ENCODE measurements at regions of chr2 and their contacts with region 1.

Region 1: DNA sequence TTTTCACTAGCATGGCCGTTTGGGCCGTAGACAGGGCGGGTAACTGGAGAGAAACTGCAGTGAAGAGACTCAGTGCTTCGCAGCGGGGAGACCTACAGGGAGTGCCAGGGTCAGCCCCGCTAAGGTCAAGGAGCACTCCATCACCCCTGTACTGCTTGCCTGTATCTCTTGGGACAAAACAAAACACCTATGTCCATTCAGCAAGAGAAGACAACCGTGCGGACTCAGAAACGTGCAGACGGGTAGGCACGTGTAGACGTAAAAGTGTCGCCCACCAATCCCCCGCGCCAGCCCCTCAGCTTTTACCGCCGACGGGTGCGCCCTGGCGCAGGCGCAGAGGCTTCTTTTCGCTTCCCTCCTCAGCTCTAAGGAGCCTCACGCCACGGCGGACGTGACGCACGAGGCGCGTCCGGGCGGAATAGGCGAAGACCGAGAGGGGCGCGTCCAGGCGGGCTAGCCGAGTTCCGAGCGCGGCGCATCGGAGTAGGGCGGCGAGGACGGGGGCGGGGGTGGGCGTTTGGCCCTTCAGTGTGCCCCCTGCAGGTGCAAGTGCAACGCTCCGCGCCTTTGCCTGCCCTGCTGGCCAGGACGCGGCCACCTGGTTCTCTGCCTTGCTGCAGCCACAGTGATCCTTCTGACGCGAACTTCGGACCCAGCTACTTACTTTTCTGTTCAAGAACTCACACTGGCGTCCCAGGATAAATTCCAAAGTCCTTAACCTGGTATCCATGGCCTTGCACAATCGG is 3.3 kb upstream of the SOS1 start:
- DNase-seq: peak; percentile 94 to 98 (median 96)
- H3K4me3 ChIP-seq: peak overlapping the region; percentile 88
- H3K4me3 Mint-ChIP-seq: peak overlapping the region; percentile 87 to 95 (median 94)
- H3K27ac ChIP-seq: peak overlapping the region; percentile 91
- H3K27ac Mint-ChIP-seq: peak overlapping the region; percentile 90 to 99 (median 96)
- H3K4me1 ChIP-seq: peaks cover 32% of the 10 kb centered on the region
- H3K4me1 Mint-ChIP-seq: peaks cover 48 to 64% (median 61%) of the 10 kb centered on the region in 3 donors
- H3K27me3 ChIP-seq: no peaks in the 10 kb centered on the region
- H3K27me3 Mint-ChIP-seq: no peaks in the 10 kb centered on the region

Region 2: DNA sequence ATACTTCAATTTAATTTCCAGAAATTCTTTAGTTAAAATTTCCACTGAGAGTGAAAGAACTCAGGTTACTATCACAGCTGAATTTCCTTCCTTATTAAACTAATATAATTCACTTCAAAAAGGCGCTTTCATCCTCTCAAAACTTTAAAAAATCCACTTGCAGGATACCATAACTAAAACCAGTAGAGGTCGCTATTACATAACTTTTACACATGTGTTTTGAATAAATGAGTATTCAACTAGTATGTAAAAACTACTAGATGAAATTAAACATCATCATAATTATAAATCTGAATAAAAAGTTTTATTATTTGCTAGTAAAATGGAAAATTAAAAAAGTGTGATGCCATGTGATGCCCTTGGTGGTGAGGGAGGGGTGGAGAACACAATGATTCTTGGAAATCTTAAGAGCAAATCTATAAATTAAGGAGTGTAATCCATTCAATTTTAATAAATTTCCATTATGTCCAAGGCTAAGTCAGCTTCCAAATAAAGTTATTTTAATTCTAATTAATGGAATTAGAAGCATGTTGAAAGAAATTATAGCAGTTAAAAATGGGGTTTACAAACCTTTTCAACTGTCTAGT is 64.7 kb before region 1 on chr2:
- CTCF ChIA-PET with region 1: interaction called, 19 read pairs
- POLR2A ChIA-PET with region 1: interaction called, 4 read pairs
- DNase-seq: peak in 2 of 5 donors; percentile 48 to 59
- H3K4me3 ChIP-seq: no peak overlapping the region
- H3K4me3 Mint-ChIP-seq: no peak overlapping the region
- H3K27ac ChIP-seq: no peak overlapping the region
- H3K27ac Mint-ChIP-seq: peak overlapping the region in 3 of 8 donors; percentile 5 to 23 (median 6)
- H3K4me1 ChIP-seq: no peaks in the 10 kb centered on the region
- H3K4me1 Mint-ChIP-seq: peaks cover 0 to 32% (median 14%) of the 10 kb centered on the region in 3 donors
- H3K27me3 ChIP-seq: no peaks in the 10 kb centered on the region
- H3K27me3 Mint-ChIP-seq: no peaks in the 10 kb centered on the region

Region 3: DNA sequence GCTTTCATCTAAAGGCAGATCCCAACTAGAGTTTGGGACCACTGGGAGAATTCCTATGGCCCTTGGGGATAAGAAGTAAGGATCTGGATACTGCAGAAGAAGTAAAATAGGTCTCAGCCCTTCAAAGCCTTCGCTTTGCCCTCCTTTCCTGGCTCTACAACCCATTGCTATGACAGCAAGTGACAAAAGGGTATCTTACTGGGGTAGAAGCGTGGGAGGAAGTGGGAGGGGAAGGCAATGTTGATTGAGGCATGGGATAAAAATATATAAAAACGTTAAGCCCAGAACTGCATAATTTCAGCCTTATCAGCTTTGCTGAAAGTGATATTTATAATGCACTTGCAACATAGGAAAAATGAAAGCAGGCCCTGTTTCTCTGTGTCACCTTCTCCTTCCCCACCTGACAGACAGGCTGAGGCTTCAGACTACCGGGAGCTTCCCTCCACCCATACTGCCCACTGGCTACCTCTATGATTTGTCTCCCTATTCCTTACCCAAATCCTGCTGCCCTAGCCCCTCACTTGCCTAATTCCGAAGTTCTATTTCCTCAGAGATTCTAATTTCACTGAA is 11.6 kb after region 1 on chr2:
- CTCF ChIA-PET with region 1: interaction called, 23 read pairs
- POLR2A ChIA-PET with region 1: interaction called, 10 read pairs
- DNase-seq: peak in 1 of 5 donors; percentile 26
- H3K4me3 ChIP-seq: peak overlapping the region; percentile 27
- H3K4me3 Mint-ChIP-seq: peak overlapping the region in 6 of 7 donors; percentile 58 to 73 (median 66)
- H3K27ac ChIP-seq: no peak overlapping the region
- H3K27ac Mint-ChIP-seq: peak overlapping the region in 7 of 8 donors; percentile 35 to 92 (median 79)
- H3K4me1 ChIP-seq: peaks cover 25% of the 10 kb centered on the region
- H3K4me1 Mint-ChIP-seq: peaks cover 22 to 54% (median 48%) of the 10 kb centered on the region in 3 donors
- H3K27me3 ChIP-seq: no peaks in the 10 kb centered on the region
- H3K27me3 Mint-ChIP-seq: peaks cover 0 to 2% of the 10 kb centered on the region in 2 donors

Region 4: DNA sequence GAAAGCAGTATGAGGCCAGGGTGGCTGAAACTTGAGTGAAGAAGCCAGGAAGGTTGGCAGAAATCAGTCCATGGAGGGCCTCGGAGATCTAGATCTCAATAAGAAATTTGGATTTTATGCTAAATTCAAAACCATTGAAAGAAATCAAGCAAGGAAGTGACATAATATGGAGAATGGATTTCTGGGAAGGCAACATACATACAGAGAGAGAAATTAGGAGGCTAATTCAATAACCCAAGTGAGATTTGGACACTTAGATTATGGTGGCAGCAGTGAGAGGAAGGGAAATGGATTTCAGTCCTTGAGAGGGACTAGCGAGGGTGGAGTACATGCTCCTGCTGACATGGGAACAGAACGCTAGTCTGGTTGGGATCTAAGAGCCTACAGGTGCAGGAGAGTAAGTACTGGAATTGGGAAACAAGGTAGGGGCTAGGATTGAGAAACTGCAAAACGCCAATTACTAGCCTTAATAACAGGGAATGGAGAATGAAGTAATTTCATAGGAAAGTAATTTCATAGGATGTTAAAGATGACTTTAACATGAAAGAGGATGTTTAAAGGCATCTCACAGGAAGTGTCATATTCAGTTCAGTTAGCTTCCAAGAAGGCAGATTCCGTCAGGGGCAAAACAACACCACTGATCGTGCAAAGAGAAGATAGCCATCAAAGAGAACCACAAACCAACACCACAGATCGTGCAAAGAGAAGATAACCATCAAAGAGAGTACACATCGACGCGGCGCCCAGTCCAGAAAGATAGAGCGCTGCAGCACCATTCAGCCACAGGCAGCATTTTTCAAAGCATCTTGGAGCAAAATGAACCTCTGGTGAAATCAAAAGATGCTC is 92.4 kb after region 1 on chr2:
- CTCF ChIA-PET with region 1: interaction called, 21 read pairs
- POLR2A ChIA-PET with region 1: interaction called, 37 read pairs
- DNase-seq: peak; percentile 45 to 90 (median 85)
- H3K4me3 ChIP-seq: peak overlapping the region; percentile 42
- H3K4me3 Mint-ChIP-seq: peak overlapping the region; percentile 0 to 66 (median 33)
- H3K27ac ChIP-seq: no peak overlapping the region
- H3K27ac Mint-ChIP-seq: peak overlapping the region; percentile 8 to 85 (median 60)
- H3K4me1 ChIP-seq: peaks cover 35% of the 10 kb centered on the region
- H3K4me1 Mint-ChIP-seq: peaks cover 32 to 68% (median 58%) of the 10 kb centered on the region in 3 donors
- H3K27me3 ChIP-seq: no peaks in the 10 kb centered on the region
- H3K27me3 Mint-ChIP-seq: no peaks in the 10 kb centered on the region

Measured in CD8-positive, alpha-beta memory T cell (primary cell).